ENCODE measurements at regions of chr10 and their contacts with region 1.

Region 1: GRCh38 chr10:16828114-16828568 is 10.9 kb upstream of the RSU1 start:
- DNase-seq: peak; percentile 67 to 73 (median 71)
- H3K4me3 ChIP-seq: no peak overlapping the region
- H3K4me3 Mint-ChIP-seq: no peak overlapping the region
- H3K27ac ChIP-seq: no peak overlapping the region
- H3K27ac Mint-ChIP-seq: peak overlapping the region in 5 of 7 donors; percentile 15 to 88 (median 68)
- H3K4me1 ChIP-seq: no peaks in the 10 kb centered on the region
- H3K4me1 Mint-ChIP-seq: peaks cover 2 to 6% (median 5%) of the 10 kb centered on the region in 4 donors
- H3K27me3 ChIP-seq: no peaks in the 10 kb centered on the region
- H3K27me3 Mint-ChIP-seq: no peaks in the 10 kb centered on the region

Region 2: GRCh38 chr10:16809074-16809718 is 18.9 kb before region 1 on chr10:
- CTCF ChIA-PET with region 1: interaction called, 10 read pairs
- POLR2A ChIA-PET with region 1: no interaction called
- intact Hi-C with region 1: no loop called
- DNase-seq: peak in 4 of 5 donors; percentile 37 to 49 (median 42)
- H3K4me3 ChIP-seq: no peak overlapping the region
- H3K4me3 Mint-ChIP-seq: no peak overlapping the region
- H3K27ac ChIP-seq: no peak overlapping the region
- H3K27ac Mint-ChIP-seq: peak overlapping the region in 3 of 7 donors; percentile 20 to 44 (median 21)
- H3K4me1 ChIP-seq: peaks cover 7% of the 10 kb centered on the region
- H3K4me1 Mint-ChIP-seq: peaks cover 19 to 35% (median 26%) of the 10 kb centered on the region in 4 donors
- H3K27me3 ChIP-seq: no peaks in the 10 kb centered on the region
- H3K27me3 Mint-ChIP-seq: no peaks in the 10 kb centered on the region

Region 3: DNA sequence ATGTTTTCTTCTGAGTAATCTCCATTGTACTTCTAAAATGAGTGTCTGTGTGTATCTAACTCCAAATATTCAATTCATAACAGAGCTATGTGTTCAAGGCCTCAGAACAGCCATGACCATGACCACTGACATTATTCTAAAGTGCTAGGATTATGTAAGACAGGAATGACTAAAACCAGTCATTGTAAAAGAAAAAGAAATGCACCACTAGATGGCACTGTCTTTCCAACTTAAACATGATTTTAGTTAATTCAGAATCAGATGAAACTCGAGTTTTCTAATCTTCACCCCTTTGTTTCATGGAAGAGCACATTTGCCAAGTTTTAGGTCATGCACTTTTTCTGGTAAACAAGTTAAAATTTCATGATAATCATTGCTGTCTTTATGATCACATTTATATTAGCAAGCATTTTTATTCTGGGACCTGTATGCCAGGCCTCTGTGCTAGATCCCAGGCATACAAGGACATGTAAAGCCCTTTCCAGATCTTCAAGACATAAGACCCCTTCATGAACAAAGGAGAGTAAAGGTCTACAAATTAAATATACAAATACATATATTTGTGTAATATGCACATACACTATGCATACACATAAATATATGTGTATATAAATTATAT is 15.2 kb after region 1 on chr10:
- CTCF ChIA-PET with region 1: interaction called, 12 read pairs
- POLR2A ChIA-PET with region 1: no interaction called
- intact Hi-C with region 1: loop called (anchors 1 kb)
- DNase-seq: peak in 4 of 5 donors; percentile 63 to 69 (median 67)
- H3K4me3 ChIP-seq: no peak overlapping the region
- H3K4me3 Mint-ChIP-seq: no peak overlapping the region
- H3K27ac ChIP-seq: no peak overlapping the region
- H3K27ac Mint-ChIP-seq: peak overlapping the region in 1 of 7 donors; percentile 31
- H3K4me1 ChIP-seq: no peaks in the 10 kb centered on the region
- H3K4me1 Mint-ChIP-seq: peaks cover 0 to 3% (median 0%) of the 10 kb centered on the region in 4 donors
- H3K27me3 ChIP-seq: no peaks in the 10 kb centered on the region
- H3K27me3 Mint-ChIP-seq: no peaks in the 10 kb centered on the region

Region 4: DNA sequence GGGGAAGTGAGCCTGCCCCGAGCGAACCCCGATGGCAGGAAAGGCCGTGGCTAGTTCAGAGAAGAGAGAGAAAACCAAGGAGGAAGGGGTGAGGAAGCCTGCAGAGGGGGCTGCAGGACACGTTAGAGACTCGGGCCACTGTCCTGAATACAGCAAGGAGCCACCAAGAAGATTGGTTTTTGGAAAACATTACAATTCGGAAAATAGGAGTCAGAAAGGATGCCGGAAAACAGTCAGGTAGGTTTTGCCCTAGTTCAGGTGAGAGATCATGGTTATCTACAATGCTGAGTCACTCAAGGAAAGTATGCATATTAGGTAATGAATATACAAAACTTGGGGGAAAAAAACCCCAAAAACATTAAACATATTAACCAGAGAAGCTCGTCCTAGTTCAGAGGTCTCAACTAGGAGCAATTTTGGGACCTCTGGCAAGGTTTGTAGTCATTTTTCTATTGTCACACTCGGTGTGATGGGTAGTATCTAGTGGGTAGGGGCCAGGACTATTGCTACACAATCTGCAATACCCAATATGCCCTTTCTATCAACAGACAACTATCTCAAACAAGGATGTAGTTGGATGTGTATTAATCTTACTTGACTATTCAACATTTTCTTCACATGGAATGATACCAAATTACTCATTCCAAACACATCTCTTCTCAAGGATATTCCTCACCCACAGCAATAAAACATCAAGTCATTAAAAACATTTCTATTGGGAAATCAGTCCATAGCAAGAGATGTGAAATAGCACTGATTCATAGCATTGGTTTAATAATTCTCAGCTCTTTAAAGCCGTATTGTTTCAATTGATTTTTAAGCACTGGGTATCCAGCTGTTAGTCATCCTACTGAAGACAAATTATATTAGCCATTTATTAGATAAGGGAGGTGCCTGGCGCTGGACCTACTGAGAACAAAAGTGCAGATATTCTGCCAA is 63.5 kb after region 1 on chr10:
- CTCF ChIA-PET with region 1: no interaction called
- POLR2A ChIA-PET with region 1: no interaction called
- intact Hi-C with region 1: loop called (anchors 1 kb)
- DNase-seq: peak; percentile 20 to 47 (median 37)
- H3K4me3 ChIP-seq: peak overlapping the region in 1 of 2 donors; percentile 11
- H3K4me3 Mint-ChIP-seq: peak overlapping the region; percentile 64 to 84 (median 78)
- H3K27ac ChIP-seq: no peak overlapping the region
- H3K27ac Mint-ChIP-seq: peak overlapping the region in 6 of 7 donors; percentile 18 to 86 (median 61)
- H3K4me1 ChIP-seq: peaks cover 10% of the 10 kb centered on the region
- H3K4me1 Mint-ChIP-seq: peaks cover 6 to 13% (median 9%) of the 10 kb centered on the region in 4 donors
- H3K27me3 ChIP-seq: no peaks in the 10 kb centered on the region
- H3K27me3 Mint-ChIP-seq: no peaks in the 10 kb centered on the region

Region 5: GRCh38 chr10:17249820-17250219 is 421.7 kb after region 1 on chr10:
- CTCF ChIA-PET with region 1: interaction called, 43 read pairs
- POLR2A ChIA-PET with region 1: no interaction called
- intact Hi-C with region 1: loop called (anchors 2 kb)
- DNase-seq: peak in 1 of 5 donors; percentile 22
- H3K4me3 ChIP-seq: no peak overlapping the region
- H3K4me3 Mint-ChIP-seq: no peak overlapping the region
- H3K27ac ChIP-seq: no peak overlapping the region
- H3K27ac Mint-ChIP-seq: no peak overlapping the region
- H3K4me1 ChIP-seq: no peaks in the 10 kb centered on the region
- H3K4me1 Mint-ChIP-seq: no peaks in the 10 kb centered on the region
- H3K27me3 ChIP-seq: no peaks in the 10 kb centered on the region
- H3K27me3 Mint-ChIP-seq: no peaks in the 10 kb centered on the region

Region 6: GRCh38 chr10:17742918-17743317 is 914.8 kb after region 1 on chr10:
- CTCF ChIA-PET with region 1: no interaction called
- POLR2A ChIA-PET with region 1: no interaction called
- intact Hi-C with region 1: loop called (anchors 2 kb)
- DNase-seq: peak; percentile 52 to 62 (median 58)
- H3K4me3 ChIP-seq: no peak overlapping the region
- H3K4me3 Mint-ChIP-seq: peak overlapping the region in 1 of 8 donors; percentile 20
- H3K27ac ChIP-seq: no peak overlapping the region
- H3K27ac Mint-ChIP-seq: no peak overlapping the region
- H3K4me1 ChIP-seq: peaks cover 7% of the 10 kb centered on the region
- H3K4me1 Mint-ChIP-seq: peaks cover 0 to 9% (median 4%) of the 10 kb centered on the region in 4 donors
- H3K27me3 ChIP-seq: no peaks in the 10 kb centered on the region
- H3K27me3 Mint-ChIP-seq: no peaks in the 10 kb centered on the region

Measured in CD4-positive, alpha-beta memory T cell (primary cell).